ENCODE measurements at regions of chr20 and their contacts with region 1.

Region 1: GRCh38 chr20:19995220-19995863 is 21.8 kb upstream of the NAA20 start:
- DNase-seq: peak; percentile 55 to 61
- ATAC-seq: no peak
- H3K4me3 ChIP-seq: no peak overlapping the region
- H3K27ac ChIP-seq: peak overlapping the region; percentile 90 to 93
- H3K4me1 ChIP-seq: peaks cover 51% of the 10 kb centered on the region
- CTCF ChIP-seq: peak; percentile 94
- EP300 ChIP-seq: no peak
- POLR2A ChIP-seq: no peak
- RAD21 ChIP-seq: peak; percentile 92 to 93

Region 2: GRCh38 chr20:19775360-19776253 is 219.7 kb before region 1 on chr20:
- CTCF ChIA-PET with region 1: interaction called, 10 read pairs
- POLR2A ChIA-PET with region 1: no interaction called
- DNase-seq: no peak
- ATAC-seq: peak in 1 of 2 experiments; percentile 45; a peak in 2 of 6 replicates
- H3K4me3 ChIP-seq: no peak overlapping the region
- H3K27ac ChIP-seq: no peak overlapping the region
- H3K4me1 ChIP-seq: peaks cover 32% of the 10 kb centered on the region
- CTCF ChIP-seq: no peak
- EP300 ChIP-seq: no peak
- POLR2A ChIP-seq: no peak
- RAD21 ChIP-seq: no peak

Region 3: DNA sequence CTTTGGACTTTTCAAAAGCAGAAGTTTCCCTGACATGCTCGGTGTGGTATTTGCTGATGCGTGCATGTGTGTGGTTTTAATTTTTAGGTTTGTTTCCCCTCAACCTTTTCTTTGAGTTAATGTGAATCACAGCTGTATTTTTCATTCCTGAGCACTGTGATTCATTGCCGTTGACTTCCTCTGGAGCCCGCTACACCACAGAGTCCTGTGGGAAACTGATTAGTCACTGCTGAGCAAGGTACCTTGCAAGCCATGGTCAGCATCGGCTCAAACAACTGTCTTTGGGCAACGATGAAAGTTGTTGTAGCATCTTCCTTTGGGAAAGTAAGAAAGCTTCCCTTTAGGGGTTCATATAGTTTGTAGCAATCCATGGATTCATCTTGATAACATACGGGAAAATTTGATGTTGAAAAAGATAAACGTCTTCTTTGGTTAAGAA is 179.8 kb before region 1 on chr20:
- CTCF ChIA-PET with region 1: interaction called, 15 read pairs
- POLR2A ChIA-PET with region 1: no interaction called
- DNase-seq: peak; percentile 95 to 96
- ATAC-seq: peak; percentile 99 to 100
- H3K4me3 ChIP-seq: no peak overlapping the region
- H3K27ac ChIP-seq: peak overlapping the region; percentile 80 to 89
- H3K4me1 ChIP-seq: peaks cover 40% of the 10 kb centered on the region
- CTCF ChIP-seq: peak; percentile 14; the same call in 2 of the 3 replicates
- EP300 ChIP-seq: peak; percentile 75 to 89; a peak in 3 of 5 replicates
- POLR2A ChIP-seq: no peak
- RAD21 ChIP-seq: peak; percentile 57 to 75

Region 4: GRCh38 chr20:19974626-19975435 is 20.5 kb before region 1 on chr20:
- CTCF ChIA-PET with region 1: interaction called, 79 read pairs
- POLR2A ChIA-PET with region 1: interaction called, 60 read pairs
- DNase-seq: peak; percentile 77 to 89
- ATAC-seq: peak; percentile 83 to 87
- H3K4me3 ChIP-seq: peak overlapping the region; percentile 65
- H3K27ac ChIP-seq: peak overlapping the region; percentile 94 to 95
- H3K4me1 ChIP-seq: peaks cover 40% of the 10 kb centered on the region
- CTCF ChIP-seq: no peak
- EP300 ChIP-seq: no peak
- POLR2A ChIP-seq: peak; percentile 72
- RAD21 ChIP-seq: peak in 1 of 2 experiments; percentile 31; a peak in 3 of 5 replicates

Region 5: GRCh38 chr20:19981031-19981451 is 14.3 kb before region 1 on chr20:
- CTCF ChIA-PET with region 1: interaction called, 79 read pairs
- POLR2A ChIA-PET with region 1: interaction called, 60 read pairs
- DNase-seq: peak in 1 of 2 experiments; percentile 29
- ATAC-seq: no peak
- H3K4me3 ChIP-seq: no peak overlapping the region
- H3K27ac ChIP-seq: peak overlapping the region; percentile 5 to 64; a peak in 3 of 6 replicates
- H3K4me1 ChIP-seq: peaks cover 72% of the 10 kb centered on the region
- CTCF ChIP-seq: no peak
- EP300 ChIP-seq: no peak
- POLR2A ChIP-seq: no peak
- RAD21 ChIP-seq: no peak

Region 6: GRCh38 chr20:20010639-20011500 is 15.5 kb after region 1 on chr20:
- CTCF ChIA-PET with region 1: interaction called, 19 read pairs
- POLR2A ChIA-PET with region 1: no interaction called
- DNase-seq: peak in 1 of 2 experiments; percentile 46
- ATAC-seq: peak in 1 of 2 experiments; percentile 52; a peak in 3 of 6 replicates
- H3K4me3 ChIP-seq: 0 out of 3 replicates have a peak overlapping the region, but pooled peaks have one; percentile 2
- H3K27ac ChIP-seq: peak overlapping the region; percentile 53 to 70
- H3K4me1 ChIP-seq: peaks cover 15% of the 10 kb centered on the region
- CTCF ChIP-seq: no peak
- EP300 ChIP-seq: no peak
- POLR2A ChIP-seq: no peak
- RAD21 ChIP-seq: 0 out of 5 replicates have a peak, but pooled peaks of 1 of the 2 experiments have one; percentile 9